B cell (primary cell): ENCODE measurements at regions of chr11 and their contacts with region 1.

Region 1: GRCh38 chr11:34926101-34926830 is 9.8 kb downstream of the PDHX start:
- DNase-seq: peak; percentile 70
- ATAC-seq: peak; percentile 57
- H3K4me3 ChIP-seq: no peak overlapping the region
- H3K4me3 Mint-ChIP-seq: no peak overlapping the region
- H3K27ac ChIP-seq: no peak overlapping the region
- H3K27ac Mint-ChIP-seq: no peak overlapping the region
- H3K4me1 ChIP-seq: no peaks in the 10 kb centered on the region
- H3K4me1 Mint-ChIP-seq: peaks cover 15% of the 10 kb centered on the region
- H3K27me3 ChIP-seq: no peaks in the 10 kb centered on the region
- H3K27me3 Mint-ChIP-seq: no peaks in the 10 kb centered on the region
- CTCF ChIP-seq: peak; percentile 88

Region 2: GRCh38 chr11:35237860-35238715 is 311.8 kb after region 1 on chr11:
- CTCF ChIA-PET with region 1: interaction called, 64 read pairs
- POLR2A ChIA-PET with region 1: no interaction called
- intact Hi-C with region 1: loop called (anchors 1 kb)
- DNase-seq: peak; percentile 81
- ATAC-seq: no peak
- H3K4me3 ChIP-seq: no peak overlapping the region
- H3K4me3 Mint-ChIP-seq: no peak overlapping the region
- H3K27ac ChIP-seq: no peak overlapping the region
- H3K27ac Mint-ChIP-seq: no peak overlapping the region
- H3K4me1 ChIP-seq: peaks cover 6 to 11% of the 10 kb centered on the region in 2 donors
- H3K4me1 Mint-ChIP-seq: peaks cover 22% of the 10 kb centered on the region
- H3K27me3 ChIP-seq: no peaks in the 10 kb centered on the region
- H3K27me3 Mint-ChIP-seq: no peaks in the 10 kb centered on the region
- CTCF ChIP-seq: peak; percentile 90

Region 3: GRCh38 chr11:35305670-35306382 is 379.6 kb after region 1 on chr11:
- CTCF ChIA-PET with region 1: interaction called, 30 read pairs
- POLR2A ChIA-PET with region 1: no interaction called
- intact Hi-C with region 1: loop called (anchors 2 kb)
- DNase-seq: peak; percentile 52
- ATAC-seq: peak; percentile 41
- H3K4me3 ChIP-seq: peak overlapping the region in 1 of 5 experiments; percentile 7
- H3K4me3 Mint-ChIP-seq: peak overlapping the region; percentile 27
- H3K27ac ChIP-seq: no peak overlapping the region
- H3K27ac Mint-ChIP-seq: no peak overlapping the region
- H3K4me1 ChIP-seq: peaks cover 6 to 9% of the 10 kb centered on the region in 2 donors
- H3K4me1 Mint-ChIP-seq: peaks cover 12% of the 10 kb centered on the region
- H3K27me3 ChIP-seq: no peaks in the 10 kb centered on the region
- H3K27me3 Mint-ChIP-seq: no peaks in the 10 kb centered on the region
- CTCF ChIP-seq: peak; percentile 54

Region 4: DNA sequence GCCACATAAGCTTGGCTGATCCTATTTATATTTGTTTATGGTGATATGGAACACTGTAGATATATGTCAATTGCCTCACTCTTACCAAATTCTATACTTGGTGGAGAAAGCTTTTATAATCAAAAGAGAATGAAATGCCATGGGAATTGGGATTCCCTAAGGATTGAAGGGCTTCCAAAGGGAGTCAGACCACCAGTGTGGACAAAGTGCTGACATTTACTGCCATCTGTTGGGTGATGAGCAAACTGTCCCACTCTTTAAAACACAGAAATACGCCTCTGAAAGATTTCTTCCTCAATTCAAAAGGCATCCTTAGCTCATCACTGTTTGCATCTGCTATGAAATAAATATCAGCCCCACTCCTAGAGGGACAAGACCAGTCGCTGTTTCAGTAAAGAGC is 486.0 kb after region 1 on chr11:
- CTCF ChIA-PET with region 1: interaction called, 4 read pairs
- POLR2A ChIA-PET with region 1: no interaction called
- intact Hi-C with region 1: loop called (anchors 5 kb)
- DNase-seq: peak; percentile 13
- ATAC-seq: no peak
- H3K4me3 ChIP-seq: no peak overlapping the region
- H3K4me3 Mint-ChIP-seq: no peak overlapping the region
- H3K27ac ChIP-seq: no peak overlapping the region
- H3K27ac Mint-ChIP-seq: no peak overlapping the region
- H3K4me1 ChIP-seq: no peaks in the 10 kb centered on the region
- H3K4me1 Mint-ChIP-seq: no peaks in the 10 kb centered on the region
- H3K27me3 ChIP-seq: peaks cover 0 to 19% (median 5%) of the 10 kb centered on the region in 4 experiments
- H3K27me3 Mint-ChIP-seq: peaks cover 48% of the 10 kb centered on the region
- CTCF ChIP-seq: peak; percentile 43

Region 5: GRCh38 chr11:35485656-35486322 is 559.5 kb after region 1 on chr11:
- CTCF ChIA-PET with region 1: interaction called, 20 read pairs
- POLR2A ChIA-PET with region 1: no interaction called
- intact Hi-C with region 1: no loop called
- DNase-seq: peak; percentile 71
- ATAC-seq: peak; percentile 70
- H3K4me3 ChIP-seq: no peak overlapping the region
- H3K4me3 Mint-ChIP-seq: no peak overlapping the region
- H3K27ac ChIP-seq: no peak overlapping the region
- H3K27ac Mint-ChIP-seq: no peak overlapping the region
- H3K4me1 ChIP-seq: no peaks in the 10 kb centered on the region
- H3K4me1 Mint-ChIP-seq: no peaks in the 10 kb centered on the region
- H3K27me3 ChIP-seq: peaks cover 0 to 22% (median 9%) of the 10 kb centered on the region in 4 experiments
- H3K27me3 Mint-ChIP-seq: peaks cover 57% of the 10 kb centered on the region
- CTCF ChIP-seq: peak; percentile 97